ENCODE measurements at regions of chr3 and their contacts with region 1.

Region 1: DNA sequence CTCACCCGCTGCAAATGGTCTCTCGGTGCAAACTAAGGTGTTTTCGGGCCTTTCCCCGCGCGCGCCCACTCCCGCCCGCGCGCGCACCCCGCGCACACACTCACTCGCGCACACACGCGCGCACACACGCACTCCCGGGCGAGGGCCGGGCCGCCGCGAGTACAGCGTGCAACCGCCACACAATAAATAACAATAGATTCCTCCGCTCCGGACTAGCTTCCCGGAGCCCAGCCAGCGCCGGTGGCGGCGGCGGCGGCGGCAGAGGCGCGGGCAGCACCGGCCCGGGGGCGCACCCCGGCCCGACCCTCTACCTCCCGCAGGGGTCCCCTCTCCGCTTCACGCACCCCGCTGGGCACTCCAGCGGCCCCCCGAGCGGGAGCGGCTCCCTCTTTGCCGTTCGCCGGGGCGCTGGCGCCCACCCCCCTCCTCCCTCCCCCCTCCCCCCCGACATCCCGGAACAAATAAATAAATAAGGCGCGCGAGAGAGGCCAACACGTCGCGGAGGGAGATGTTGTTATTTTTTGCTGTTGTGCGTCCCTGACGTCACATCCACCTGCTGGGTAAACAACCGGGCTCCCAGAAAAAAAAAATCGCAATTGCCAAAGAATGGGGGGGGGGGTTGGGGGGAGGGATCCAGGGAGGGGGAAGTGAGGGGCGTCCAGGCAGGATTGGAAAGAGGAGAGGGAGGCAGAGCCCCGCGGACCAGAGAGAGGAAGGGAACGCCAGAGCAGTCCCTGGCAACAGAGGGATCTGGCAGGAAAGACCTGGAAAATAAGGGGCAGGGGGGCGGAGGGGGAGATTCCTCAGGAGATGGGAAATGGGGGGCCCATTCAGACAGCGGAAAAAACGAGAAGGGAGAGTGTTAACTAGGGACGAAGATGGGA is at the start of gene FOXP1:
- DNase-seq: peak in 1 of 2 donors; percentile 89
- H3K4me3 ChIP-seq: peak within 1 kb of the TSS; percentile 85 to 93
- H3K27ac ChIP-seq: peak within 1 kb of the TSS; percentile 96 to 100
- H3K4me1 ChIP-seq: peaks cover 0 to 12% of the 10 kb centered on the region in 2 donors
- H3K27me3 ChIP-seq: no peaks in the 10 kb centered on the region
- CTCF ChIP-seq: no peak
- total RNA-seq, gene FOXP1: 171 TPM

Region 2: GRCh38 chr3:70531063-70531657 is 1052.6 kb before region 1 on chr3:
- intact Hi-C with region 1: loop called (anchors 5 kb)
- DNase-seq: no peak
- H3K4me3 ChIP-seq: no peak overlapping the region
- H3K27ac ChIP-seq: no peak overlapping the region
- H3K4me1 ChIP-seq: no peaks in the 10 kb centered on the region
- H3K27me3 ChIP-seq: no peaks in the 10 kb centered on the region
- CTCF ChIP-seq: peak; percentile 46 to 57 (median 48)

Region 3: GRCh38 chr3:71064288-71064955 is 519.4 kb before region 1 on chr3:
- intact Hi-C with region 1: loop called (anchors 2 kb)
- DNase-seq: peak in 1 of 2 donors; percentile 76
- H3K4me3 ChIP-seq: peak overlapping the region; percentile 66 to 80
- H3K27ac ChIP-seq: peak overlapping the region; percentile 95 to 98
- H3K4me1 ChIP-seq: peaks cover 3 to 41% of the 10 kb centered on the region in 2 donors
- H3K27me3 ChIP-seq: no peaks in the 10 kb centered on the region
- CTCF ChIP-seq: peak in 1 of 3 experiments; percentile 51

Region 4: DNA sequence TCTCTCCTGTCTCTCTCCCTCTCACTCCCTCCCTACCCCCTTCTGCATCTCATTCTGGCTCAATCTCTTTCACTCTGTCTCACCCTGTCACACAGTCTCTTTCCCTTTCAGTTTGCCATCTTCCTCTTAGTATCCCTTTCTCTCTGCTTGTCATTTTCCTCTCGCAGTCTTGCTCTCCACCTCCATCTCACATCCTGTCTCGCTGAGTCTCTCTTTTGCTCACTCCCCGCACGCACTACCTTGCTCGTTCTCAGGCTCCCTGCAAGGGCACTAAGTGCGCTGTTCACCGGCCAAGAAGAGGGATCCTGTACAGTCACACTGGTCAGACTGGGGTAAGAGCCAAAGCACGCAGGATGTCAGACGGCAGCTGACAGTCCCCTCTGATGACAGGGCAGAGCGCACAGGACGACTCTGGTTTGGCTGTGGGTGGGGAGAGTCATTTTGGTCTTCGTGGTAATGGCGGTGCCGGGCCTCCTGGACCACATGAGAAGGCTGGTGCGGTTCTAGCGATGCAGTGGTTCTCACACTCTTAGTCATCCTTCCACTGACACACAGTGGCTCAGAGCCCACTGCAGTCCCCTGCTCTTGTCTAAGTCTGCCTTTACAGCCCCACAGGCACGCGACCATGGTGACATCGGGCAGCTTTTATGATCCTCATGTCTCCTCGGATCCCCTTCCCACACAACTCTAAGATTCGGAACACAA is 357.1 kb before region 1 on chr3:
- intact Hi-C with region 1: loop called (anchors 5 kb)
- DNase-seq: peak; percentile 18 to 74
- H3K4me3 ChIP-seq: peak overlapping the region; percentile 40 to 56
- H3K27ac ChIP-seq: peak overlapping the region; percentile 87 to 88
- H3K4me1 ChIP-seq: peaks cover 0 to 30% of the 10 kb centered on the region in 2 donors
- H3K27me3 ChIP-seq: no peaks in the 10 kb centered on the region
- CTCF ChIP-seq: no peak

Region 5: GRCh38 chr3:71389911-71390573 is 193.8 kb before region 1 on chr3:
- intact Hi-C with region 1: loop called (anchors 5 kb)
- DNase-seq: peak in 1 of 2 donors; percentile 21
- H3K4me3 ChIP-seq: peak overlapping the region in 1 of 2 donors; percentile 29
- H3K27ac ChIP-seq: peak overlapping the region; percentile 2 to 22
- H3K4me1 ChIP-seq: peaks cover 0 to 16% of the 10 kb centered on the region in 2 donors
- H3K27me3 ChIP-seq: no peaks in the 10 kb centered on the region
- CTCF ChIP-seq: no peak

Region 6: DNA sequence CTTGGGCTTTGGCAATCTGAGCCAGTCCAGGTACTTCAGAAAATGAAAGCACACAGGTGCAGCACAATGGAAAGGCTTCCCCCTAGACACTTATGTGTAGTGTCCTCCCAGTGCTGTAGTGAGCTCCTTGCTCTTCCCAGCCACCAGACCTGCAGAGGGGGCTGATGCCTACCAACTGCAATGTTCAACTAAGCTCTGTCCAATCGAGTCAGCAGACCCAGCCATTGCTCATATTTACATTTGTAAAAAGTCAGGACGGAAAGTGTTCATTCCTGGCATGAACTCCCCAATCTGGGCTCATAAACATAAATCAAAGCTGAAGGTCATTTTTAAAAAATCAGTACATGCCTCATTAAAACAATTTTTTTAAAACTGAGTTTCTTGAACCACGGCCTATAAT is 73.3 kb before region 1 on chr3:
- intact Hi-C with region 1: loop called (anchors 1 kb)
- DNase-seq: no peak
- H3K4me3 ChIP-seq: no peak overlapping the region
- H3K27ac ChIP-seq: peak overlapping the region; percentile 44 to 59
- H3K4me1 ChIP-seq: peaks cover 0 to 12% of the 10 kb centered on the region in 2 donors
- H3K27me3 ChIP-seq: no peaks in the 10 kb centered on the region
- CTCF ChIP-seq: peak in 2 of 3 experiments; percentile 31 to 41

Region 7: GRCh38 chr3:71616571-71617101 is 32.8 kb after region 1 on chr3:
- intact Hi-C with region 1: no loop called
- DNase-seq: no peak
- H3K4me3 ChIP-seq: no peak overlapping the region
- H3K27ac ChIP-seq: no peak overlapping the region
- H3K4me1 ChIP-seq: no peaks in the 10 kb centered on the region
- H3K27me3 ChIP-seq: no peaks in the 10 kb centered on the region
- CTCF ChIP-seq: no peak

Measured in ascending aorta (tissue), 2 donors.